CD4-positive, alpha-beta memory T cell (primary cell): ENCODE measurements at regions of chr7 and their contacts with region 1.

Region 1: DNA sequence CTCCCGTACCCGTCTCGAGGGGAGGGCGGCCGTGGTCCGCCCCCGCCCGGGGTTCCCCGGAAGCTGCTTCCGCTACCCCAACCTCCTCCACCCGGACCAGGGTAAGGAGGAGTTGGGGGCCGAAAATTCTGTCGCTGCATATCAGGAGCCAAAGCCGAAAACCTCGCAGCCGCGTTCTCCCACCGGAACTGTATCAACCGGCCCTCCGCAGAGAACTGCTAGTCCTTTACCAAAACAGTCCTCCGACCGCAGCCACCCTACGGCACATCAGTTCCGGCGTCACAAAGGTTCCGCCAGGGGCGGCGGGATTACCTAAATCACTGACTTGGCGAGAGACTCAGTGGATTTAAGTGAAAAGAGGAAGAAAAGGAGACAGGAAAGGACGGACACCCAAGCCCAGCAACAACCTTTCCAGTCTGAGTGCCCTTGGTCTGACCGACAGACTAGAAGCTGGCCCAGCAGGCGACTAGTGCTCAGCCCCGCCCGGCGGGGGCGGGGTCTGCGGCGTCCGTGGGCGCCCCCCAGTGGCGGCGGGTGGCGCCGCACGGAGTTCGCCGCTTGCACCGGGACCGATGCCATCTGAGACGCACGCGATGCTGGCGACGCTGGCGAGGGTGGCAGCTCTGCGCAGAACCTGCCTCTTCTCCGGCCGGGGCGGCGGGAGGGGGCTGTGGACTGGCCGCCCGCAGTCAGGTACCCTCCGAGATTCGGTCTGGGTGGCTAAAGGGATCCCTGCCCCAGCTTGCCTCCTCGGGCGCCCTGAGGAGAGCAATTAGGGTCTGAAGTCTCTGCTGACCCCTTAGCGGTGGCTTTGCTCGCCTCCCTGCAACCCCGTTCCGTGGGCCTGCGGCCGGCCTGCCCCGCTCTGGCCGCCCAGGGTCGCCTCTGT is at the starts of genes MPLKIP and SUGCT:
- DNase-seq: peak; percentile 87 to 93 (median 90)
- H3K4me3 ChIP-seq: peak within 1 kb of the TSS; percentile 98 to 99
- H3K4me3 Mint-ChIP-seq: peak within 1 kb of the TSS; percentile 93 to 100 (median 98)
- H3K27ac ChIP-seq: peak within 1 kb of the TSS; percentile 87
- H3K27ac Mint-ChIP-seq: peak within 1 kb of the TSS; percentile 94 to 100 (median 98)
- H3K4me1 ChIP-seq: peaks cover 38% of the 10 kb centered on the region
- H3K4me1 Mint-ChIP-seq: peaks cover 15 to 49% (median 27%) of the 10 kb centered on the region in 4 donors
- H3K27me3 ChIP-seq: no peaks in the 10 kb centered on the region
- H3K27me3 Mint-ChIP-seq: peaks cover 0 to 4% of the 10 kb centered on the region in 2 donors
- total RNA-seq, gene MPLKIP: 34.3 to 34.8 TPM
- total RNA-seq, gene SUGCT: 1.7 to 4.4 TPM

Region 2: GRCh38 chr7:38908759-38909335 is 1225.8 kb before region 1 on chr7 and contains the start of gene VPS41:
- CTCF ChIA-PET with region 1: no interaction called
- POLR2A ChIA-PET with region 1: no interaction called
- intact Hi-C with region 1: loop called (anchors 5 kb)
- DNase-seq: peak; percentile 83 to 88 (median 84)
- H3K4me3 ChIP-seq: peak within 1 kb of the TSS; percentile 75 to 82
- H3K4me3 Mint-ChIP-seq: peak within 1 kb of the TSS; percentile 93 to 100 (median 99)
- H3K27ac ChIP-seq: peak within 1 kb of the TSS; percentile 51
- H3K27ac Mint-ChIP-seq: peak within 1 kb of the TSS; percentile 84 to 99 (median 96)
- H3K4me1 ChIP-seq: peaks cover 17% of the 10 kb centered on the region
- H3K4me1 Mint-ChIP-seq: peaks cover 18 to 38% (median 29%) of the 10 kb centered on the region in 4 donors
- H3K27me3 ChIP-seq: no peaks in the 10 kb centered on the region
- H3K27me3 Mint-ChIP-seq: peaks cover 0 to 2% of the 10 kb centered on the region in 2 donors
- total RNA-seq, gene VPS41: 68.3 to 73.3 TPM

Region 3: DNA sequence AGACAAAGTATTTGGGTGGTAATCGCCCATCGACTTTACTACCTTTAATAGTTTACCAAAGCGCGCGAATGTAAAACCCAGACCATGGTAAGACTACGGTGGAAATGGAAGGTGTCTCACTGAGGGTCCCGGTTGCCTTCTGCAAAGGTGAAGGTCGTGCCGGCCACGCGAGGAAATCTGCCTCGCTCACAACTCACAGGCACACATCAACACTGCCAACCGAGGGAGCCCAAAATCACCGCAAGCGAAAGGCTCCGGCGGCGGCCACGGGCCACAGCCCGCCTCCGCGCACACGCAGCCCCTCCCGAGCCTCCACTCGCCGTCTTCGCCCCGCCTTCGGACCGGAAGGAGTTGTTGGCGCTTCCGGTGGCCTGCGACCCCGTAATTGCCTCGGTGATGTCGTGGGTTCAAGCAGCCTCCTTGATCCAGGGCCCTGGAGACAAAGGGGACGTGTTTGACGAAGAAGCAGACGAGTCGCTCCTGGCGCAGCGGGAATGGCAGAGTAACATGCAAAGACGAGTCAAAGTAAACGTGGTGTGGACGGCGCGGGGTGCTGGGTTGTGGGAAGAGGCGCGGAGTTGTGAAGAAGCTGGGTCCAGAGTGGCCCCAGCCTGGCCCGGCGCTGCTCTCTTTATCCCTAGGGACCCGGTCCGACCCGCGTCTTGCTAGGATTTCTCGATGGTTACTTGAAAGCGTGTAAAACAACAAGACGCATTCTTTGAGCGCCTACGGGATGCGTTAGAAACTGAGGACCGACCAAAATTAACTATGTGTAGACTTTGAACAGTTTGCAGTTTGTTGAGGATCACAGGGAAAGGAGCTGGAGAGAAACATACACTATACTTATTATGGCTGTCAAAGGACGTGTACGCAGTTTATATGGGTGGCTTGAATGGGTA is 568.4 kb before region 1 on chr7 and contains the start of gene YAE1:
- CTCF ChIA-PET with region 1: no interaction called
- POLR2A ChIA-PET with region 1: interaction called, 3 read pairs
- intact Hi-C with region 1: loop called (anchors 2 kb)
- DNase-seq: peak; percentile 71 to 75 (median 72)
- H3K4me3 ChIP-seq: peak within 1 kb of the TSS; percentile 83 to 86
- H3K4me3 Mint-ChIP-seq: peak within 1 kb of the TSS; percentile 98 to 100 (median 100)
- H3K27ac ChIP-seq: peak within 1 kb of the TSS; percentile 62
- H3K27ac Mint-ChIP-seq: peak within 1 kb of the TSS; percentile 87 to 99 (median 98)
- H3K4me1 ChIP-seq: peaks cover 19% of the 10 kb centered on the region
- H3K4me1 Mint-ChIP-seq: peaks cover 19 to 29% (median 24%) of the 10 kb centered on the region in 4 donors
- H3K27me3 ChIP-seq: no peaks in the 10 kb centered on the region
- H3K27me3 Mint-ChIP-seq: peaks cover 0 to 1% of the 10 kb centered on the region in 2 donors
- total RNA-seq, gene YAE1: 23.4 to 27.5 TPM

Region 4: GRCh38 chr7:39732837-39733804 is 401.6 kb before region 1 on chr7:
- CTCF ChIA-PET with region 1: interaction called, 3 read pairs
- POLR2A ChIA-PET with region 1: interaction called, 7 read pairs
- intact Hi-C with region 1: loop called (anchors 1 kb)
- DNase-seq: peak; percentile 87 to 97 (median 94)
- H3K4me3 ChIP-seq: peak overlapping the region; percentile 37 to 84
- H3K4me3 Mint-ChIP-seq: peak overlapping the region; percentile 90 to 100 (median 96)
- H3K27ac ChIP-seq: peak overlapping the region; percentile 88
- H3K27ac Mint-ChIP-seq: peak overlapping the region; percentile 94 to 100 (median 97)
- H3K4me1 ChIP-seq: peaks cover 41% of the 10 kb centered on the region
- H3K4me1 Mint-ChIP-seq: peaks cover 23 to 56% (median 39%) of the 10 kb centered on the region in 4 donors
- H3K27me3 ChIP-seq: no peaks in the 10 kb centered on the region
- H3K27me3 Mint-ChIP-seq: peaks cover 0 to 1% of the 10 kb centered on the region in 2 donors

Region 5: GRCh38 chr7:40033826-40034225 is 100.8 kb before region 1 on chr7:
- CTCF ChIA-PET with region 1: no interaction called
- POLR2A ChIA-PET with region 1: no interaction called
- intact Hi-C with region 1: no loop called
- DNase-seq: no peak
- H3K4me3 ChIP-seq: no peak overlapping the region
- H3K4me3 Mint-ChIP-seq: no peak overlapping the region
- H3K27ac ChIP-seq: no peak overlapping the region
- H3K27ac Mint-ChIP-seq: peak overlapping the region in 3 of 7 donors; percentile 1 to 45 (median 18)
- H3K4me1 ChIP-seq: peaks cover 8% of the 10 kb centered on the region
- H3K4me1 Mint-ChIP-seq: peaks cover 19 to 35% (median 33%) of the 10 kb centered on the region in 4 donors
- H3K27me3 ChIP-seq: no peaks in the 10 kb centered on the region
- H3K27me3 Mint-ChIP-seq: no peaks in the 10 kb centered on the region

Region 6: GRCh38 chr7:40199076-40199802 is 64.6 kb after region 1 on chr7:
- CTCF ChIA-PET with region 1: no interaction called
- POLR2A ChIA-PET with region 1: no interaction called
- intact Hi-C with region 1: no loop called
- DNase-seq: no peak
- H3K4me3 ChIP-seq: no peak overlapping the region
- H3K4me3 Mint-ChIP-seq: no peak overlapping the region
- H3K27ac ChIP-seq: no peak overlapping the region
- H3K27ac Mint-ChIP-seq: no peak overlapping the region
- H3K4me1 ChIP-seq: no peaks in the 10 kb centered on the region
- H3K4me1 Mint-ChIP-seq: no peaks in the 10 kb centered on the region
- H3K27me3 ChIP-seq: no peaks in the 10 kb centered on the region
- H3K27me3 Mint-ChIP-seq: peaks cover 0 to 3% of the 10 kb centered on the region in 2 donors